Aorta (tissue), 5 donors: ENCODE measurements at regions of chr11 and their contacts with region 1.

Region 1: DNA sequence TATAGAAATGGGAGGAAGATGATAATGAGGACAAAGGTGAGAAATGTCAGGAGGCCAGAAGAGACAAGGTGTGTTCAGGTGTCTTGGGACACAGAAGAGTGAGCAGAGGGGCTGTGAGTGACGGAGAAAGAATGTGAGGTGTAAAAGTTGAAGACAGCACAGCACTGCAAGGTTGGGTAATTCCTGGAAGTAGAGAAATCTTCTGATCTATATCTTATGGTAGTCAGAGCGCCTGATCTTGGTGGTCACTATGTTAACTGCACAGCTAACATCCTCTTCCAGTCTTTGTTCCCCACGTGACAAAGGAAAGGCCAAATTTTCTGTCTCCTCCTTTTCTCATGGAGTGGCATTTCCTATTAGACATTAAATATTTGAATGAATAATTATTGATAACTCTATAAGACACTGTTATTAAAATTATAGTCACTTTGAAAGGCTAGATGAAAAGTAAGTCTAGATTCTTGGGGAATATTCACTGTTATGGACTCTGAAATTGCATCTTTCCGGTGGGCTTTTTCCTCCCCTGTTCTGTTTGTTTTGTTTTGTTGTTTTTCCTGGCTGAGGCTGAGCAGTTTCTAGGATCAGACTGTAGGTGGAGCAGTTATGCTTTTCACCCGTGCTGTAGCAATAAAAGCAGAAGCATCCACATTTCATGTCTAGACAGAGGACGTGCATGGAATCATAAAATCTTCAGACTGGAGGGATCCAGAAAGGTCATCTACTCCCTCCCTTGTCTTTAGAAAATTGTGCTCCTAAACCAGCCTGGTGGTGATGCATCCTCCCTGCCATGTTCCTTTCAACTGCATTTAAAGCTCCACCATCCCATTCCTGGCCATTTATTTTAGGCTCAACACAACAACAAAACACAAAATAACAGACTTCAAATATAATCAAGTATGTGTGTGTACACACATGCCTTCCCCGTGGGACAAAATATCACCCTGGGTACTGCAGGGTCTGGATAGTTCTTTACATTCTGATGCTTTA is 26.6 kb downstream of the SC5D start:
- DNase-seq: no peak
- ATAC-seq: no peak
- H3K4me3 ChIP-seq: no peak overlapping the region
- H3K27ac ChIP-seq: no peak overlapping the region
- H3K4me1 ChIP-seq: no peaks in the 10 kb centered on the region
- H3K27me3 ChIP-seq: no peaks in the 10 kb centered on the region

Region 2: DNA sequence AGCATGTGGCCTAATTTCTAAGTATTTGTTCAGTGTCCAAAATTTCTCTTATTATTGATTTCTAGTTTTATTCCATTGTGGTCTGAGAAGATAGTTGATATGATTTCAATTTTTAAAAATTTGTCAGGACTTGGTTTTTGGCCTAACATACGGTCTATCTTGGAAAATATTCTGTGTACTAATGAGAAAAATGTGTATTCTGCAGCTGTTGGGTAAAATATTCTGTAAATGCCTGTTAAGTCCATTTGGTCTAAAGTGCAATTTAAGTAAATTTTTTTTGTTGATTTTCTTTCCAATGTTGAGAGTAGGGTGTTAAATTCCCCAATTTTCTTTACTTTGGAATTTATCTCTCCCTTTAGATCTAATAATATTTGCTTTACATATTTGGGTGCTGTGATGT is 139.8 kb before region 1 on chr11:
- intact Hi-C with region 1: no loop called
- DNase-seq: no peak
- ATAC-seq: no peak
- H3K4me3 ChIP-seq: no peak overlapping the region
- H3K27ac ChIP-seq: no peak overlapping the region
- H3K4me1 ChIP-seq: no peaks in the 10 kb centered on the region
- H3K27me3 ChIP-seq: no peaks in the 10 kb centered on the region

Region 3: DNA sequence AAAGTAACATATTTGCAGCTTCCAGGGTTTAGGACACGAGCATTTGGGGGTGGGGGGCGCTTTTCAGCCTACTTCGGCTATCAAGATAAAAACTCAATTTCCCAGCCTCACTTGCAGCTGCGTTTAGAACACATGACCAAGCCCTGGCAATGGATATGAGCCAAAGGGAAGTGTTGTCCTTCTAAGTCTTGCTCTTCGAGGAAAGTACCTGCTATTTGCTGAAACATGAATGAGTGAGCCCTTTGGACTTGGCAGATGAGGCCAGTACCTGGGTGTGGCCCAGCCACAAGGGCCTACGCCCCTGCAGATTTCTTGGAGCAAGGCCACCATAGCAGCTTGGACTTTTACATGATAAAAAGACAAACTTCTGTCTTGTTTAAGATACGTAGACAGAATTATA is 72.8 kb after region 1 on chr11:
- intact Hi-C with region 1: no loop called
- DNase-seq: no peak
- ATAC-seq: no peak
- H3K4me3 ChIP-seq: no peak overlapping the region
- H3K27ac ChIP-seq: no peak overlapping the region
- H3K4me1 ChIP-seq: no peaks in the 10 kb centered on the region
- H3K27me3 ChIP-seq: no peaks in the 10 kb centered on the region

Region 4: DNA sequence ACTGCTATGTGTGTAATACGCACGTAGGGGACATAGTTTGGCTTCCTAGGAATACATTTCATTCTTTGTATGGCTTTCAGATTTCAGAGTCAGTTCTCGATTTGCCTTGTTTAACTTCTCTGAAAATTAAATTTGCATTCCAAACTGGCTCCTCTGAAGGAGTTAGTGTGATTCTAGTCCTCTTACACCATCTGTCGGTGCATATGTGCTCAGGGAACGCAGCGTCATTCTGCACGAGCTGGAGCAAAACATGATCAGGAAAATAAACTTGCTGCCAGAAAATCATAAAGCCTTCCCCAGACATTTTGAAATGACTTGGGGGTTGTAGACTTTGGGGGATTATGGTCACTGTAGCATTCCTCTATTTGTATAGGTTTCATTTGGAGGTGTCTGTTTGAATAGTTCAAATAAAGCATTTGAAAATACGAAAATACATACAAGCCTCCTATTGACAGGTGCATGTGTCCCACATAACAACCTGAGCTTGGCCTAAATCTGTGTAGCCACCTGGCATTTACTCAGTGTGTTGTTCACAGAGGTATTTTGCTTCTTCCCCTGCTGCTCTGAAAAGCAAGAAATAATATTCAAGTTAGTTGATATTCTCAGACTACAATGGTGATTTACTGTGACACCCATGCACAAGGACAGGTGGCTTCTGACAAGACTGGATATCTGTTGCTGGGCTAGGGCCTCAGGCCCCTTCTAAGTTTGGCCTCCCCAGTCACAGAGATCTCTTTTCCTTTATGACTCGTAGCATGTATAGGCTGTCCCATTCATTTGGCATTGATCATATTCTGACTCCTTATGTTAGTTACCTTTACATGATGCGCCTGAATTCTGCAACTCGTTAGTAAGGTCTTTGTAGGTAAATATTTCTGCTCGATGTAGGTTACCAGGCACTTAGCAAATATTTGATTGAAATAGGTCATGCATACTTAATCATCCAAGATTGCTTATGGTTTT is 215.3 kb after region 1 on chr11:
- intact Hi-C with region 1: loop called (anchors 2 to 5 kb)
- DNase-seq: no peak
- ATAC-seq: no peak
- H3K4me3 ChIP-seq: no peak overlapping the region
- H3K27ac ChIP-seq: no peak overlapping the region
- H3K4me1 ChIP-seq: no peaks in the 10 kb centered on the region
- H3K27me3 ChIP-seq: no peaks in the 10 kb centered on the region

Region 5: GRCh38 chr11:121591405-121592033 is 272.4 kb after region 1 on chr11:
- intact Hi-C with region 1: loop called (anchors 2 kb)
- DNase-seq: peak in 1 of 2 donors; percentile 60
- ATAC-seq: peak; percentile 85
- H3K4me3 ChIP-seq: no peak overlapping the region
- H3K27ac ChIP-seq: no peak overlapping the region
- H3K4me1 ChIP-seq: no peaks in the 10 kb centered on the region
- H3K27me3 ChIP-seq: no peaks in the 10 kb centered on the region